GM12878 (cell line): ENCODE measurements at regions of chr14 and their contacts with region 1.

Region 1: DNA sequence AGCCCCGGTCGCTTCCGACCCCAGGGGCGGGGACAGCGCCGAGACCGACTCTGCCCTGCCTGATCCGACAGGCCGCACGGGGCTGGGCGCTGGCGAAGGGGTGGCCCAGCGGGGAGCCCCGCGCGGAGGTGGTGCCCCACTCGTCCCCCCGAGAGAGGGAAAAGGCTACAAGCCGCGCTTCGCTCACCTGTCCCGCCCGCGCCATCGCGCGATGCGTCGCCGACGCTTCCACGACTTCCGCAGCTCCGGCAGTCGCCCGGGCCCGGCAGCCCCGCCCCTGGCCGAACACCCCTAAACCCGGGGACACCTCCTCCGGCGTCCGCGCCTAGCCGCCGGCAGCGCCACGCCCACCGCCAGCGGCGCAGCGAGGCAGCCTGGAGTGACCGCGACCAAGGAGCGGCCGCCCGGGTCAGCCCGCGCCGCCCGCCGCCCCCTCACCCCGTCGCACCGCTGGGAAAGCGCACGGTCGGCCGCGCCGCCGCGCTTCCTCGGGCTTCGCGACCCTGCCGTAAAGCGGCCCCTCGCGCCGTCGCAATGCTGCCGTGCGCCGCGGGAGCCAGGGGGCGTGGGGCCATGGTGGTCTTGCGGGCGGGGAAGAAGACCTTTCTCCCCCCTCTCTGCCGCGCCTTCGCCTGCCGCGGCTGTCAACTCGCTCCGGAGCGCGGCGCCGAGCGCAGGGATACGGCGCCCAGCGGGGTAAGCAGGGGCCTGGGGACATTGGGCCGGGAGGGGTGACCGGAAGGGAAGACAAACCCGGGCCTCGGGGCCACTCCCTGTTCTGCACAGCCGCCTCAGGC is at the starts of genes BAG5 and COA8:
- DNase-seq: peak; percentile 35
- ATAC-seq: peak; percentile 85
- H3K4me3 ChIP-seq: peak within 1 kb of the TSS; percentile 97
- H3K27ac ChIP-seq: peak within 1 kb of the TSS; percentile 94
- H3K4me1 ChIP-seq: peaks cover 16% of the 10 kb centered on the region
- H3K27me3 ChIP-seq: no peaks in the 10 kb centered on the region
- CTCF ChIP-seq: no peak
- EP300 ChIP-seq: no peak
- POLR2A ChIP-seq: peak; percentile 94
- RAD21 ChIP-seq: no peak
- polyA plus RNA-seq, gene BAG5: 9.9 to 10.9 TPM
- polyA plus RNA-seq, gene COA8: 6.1 to 11.3 TPM

Region 2: GRCh38 chr14:103520657-103521437 is 41.8 kb before region 1 on chr14:
- CTCF ChIA-PET with region 1: interaction called, 8 read pairs
- POLR2A ChIA-PET with region 1: no interaction called
- RAD21 ChIA-PET with region 1: interaction called, 3 read pairs
- SMC1A ChIA-PET with region 1: interaction called, 3 read pairs
- in situ Hi-C with region 1: loop called (anchors 5 kb)
- intact Hi-C with region 1: no loop called
- DNase-seq: no peak
- ATAC-seq: peak; percentile 69
- H3K4me3 ChIP-seq: peak overlapping the region; percentile 66
- H3K27ac ChIP-seq: no peak overlapping the region
- H3K4me1 ChIP-seq: peaks cover 25% of the 10 kb centered on the region
- H3K27me3 ChIP-seq: peaks cover 2% of the 10 kb centered on the region in 2 experiments; a peak in 2 of 4 replicates
- CTCF ChIP-seq: peak; percentile 38 to 63 (median 60); a peak in 4 of 6 replicates
- EP300 ChIP-seq: no peak
- POLR2A ChIP-seq: peak; percentile 64
- RAD21 ChIP-seq: 0 out of 2 replicates have a peak, but pooled peaks have one; percentile 12

Region 3: GRCh38 chr14:103546652-103547454 is 15.8 kb before region 1 on chr14:
- CTCF ChIA-PET with region 1: interaction called, 13 read pairs
- POLR2A ChIA-PET with region 1: no interaction called
- RAD21 ChIA-PET with region 1: no interaction called
- SMC1A ChIA-PET with region 1: interaction called, 3 read pairs
- in situ Hi-C with region 1: no loop called
- intact Hi-C with region 1: no loop called
- DNase-seq: no peak
- ATAC-seq: peak; percentile 93
- H3K4me3 ChIP-seq: no peak overlapping the region
- H3K27ac ChIP-seq: no peak overlapping the region
- H3K4me1 ChIP-seq: no peaks in the 10 kb centered on the region
- H3K27me3 ChIP-seq: no peaks in the 10 kb centered on the region
- CTCF ChIP-seq: peak; percentile 85 to 96 (median 90); a peak in 5 of 6 replicates
- EP300 ChIP-seq: no peak
- POLR2A ChIP-seq: no peak
- RAD21 ChIP-seq: peak; percentile 93

Region 4: GRCh38 chr14:103629503-103630121 is 67.0 kb after region 1 on chr14:
- CTCF ChIA-PET with region 1: no interaction called
- POLR2A ChIA-PET with region 1: no interaction called
- RAD21 ChIA-PET with region 1: no interaction called
- SMC1A ChIA-PET with region 1: no interaction called
- in situ Hi-C with region 1: no loop called
- intact Hi-C with region 1: loop called (anchors 5 kb)
- DNase-seq: no peak
- ATAC-seq: peak; percentile 60
- H3K4me3 ChIP-seq: peak overlapping the region; percentile 96
- H3K27ac ChIP-seq: peak overlapping the region; percentile 60
- H3K4me1 ChIP-seq: peaks cover 23% of the 10 kb centered on the region
- H3K27me3 ChIP-seq: no peaks in the 10 kb centered on the region
- CTCF ChIP-seq: no peak
- EP300 ChIP-seq: no peak
- POLR2A ChIP-seq: no peak
- RAD21 ChIP-seq: no peak

Region 5: DNA sequence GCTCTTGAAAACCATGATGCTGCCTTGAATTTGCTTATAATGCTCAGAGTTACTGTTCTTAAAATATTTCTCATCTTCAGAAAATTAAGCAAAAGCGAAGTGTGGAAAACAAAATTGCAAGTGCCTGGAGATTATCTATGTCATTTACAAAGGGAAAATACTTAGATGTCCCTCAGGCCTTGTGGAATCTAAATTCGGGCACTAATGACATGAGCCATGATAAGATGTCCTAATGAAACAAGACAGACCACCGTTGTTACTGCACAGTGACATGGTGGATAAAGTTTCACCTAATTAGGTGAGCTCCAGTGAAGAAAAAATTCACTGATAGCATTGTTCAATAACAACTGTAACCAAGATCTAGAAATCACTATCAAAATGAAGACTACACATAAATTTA is 254.4 kb after region 1 on chr14:
- CTCF ChIA-PET with region 1: no interaction called
- POLR2A ChIA-PET with region 1: no interaction called
- RAD21 ChIA-PET with region 1: no interaction called
- SMC1A ChIA-PET with region 1: no interaction called
- in situ Hi-C with region 1: no loop called
- intact Hi-C with region 1: no loop called
- DNase-seq: no peak
- ATAC-seq: no peak
- H3K4me3 ChIP-seq: no peak overlapping the region
- H3K27ac ChIP-seq: no peak overlapping the region
- H3K4me1 ChIP-seq: peaks cover 4% of the 10 kb centered on the region
- H3K27me3 ChIP-seq: no peaks in the 10 kb centered on the region
- CTCF ChIP-seq: no peak
- EP300 ChIP-seq: no peak
- POLR2A ChIP-seq: no peak
- RAD21 ChIP-seq: no peak